ENCODE measurements at regions of chr16 and their contacts with region 1.

Region 1: DNA sequence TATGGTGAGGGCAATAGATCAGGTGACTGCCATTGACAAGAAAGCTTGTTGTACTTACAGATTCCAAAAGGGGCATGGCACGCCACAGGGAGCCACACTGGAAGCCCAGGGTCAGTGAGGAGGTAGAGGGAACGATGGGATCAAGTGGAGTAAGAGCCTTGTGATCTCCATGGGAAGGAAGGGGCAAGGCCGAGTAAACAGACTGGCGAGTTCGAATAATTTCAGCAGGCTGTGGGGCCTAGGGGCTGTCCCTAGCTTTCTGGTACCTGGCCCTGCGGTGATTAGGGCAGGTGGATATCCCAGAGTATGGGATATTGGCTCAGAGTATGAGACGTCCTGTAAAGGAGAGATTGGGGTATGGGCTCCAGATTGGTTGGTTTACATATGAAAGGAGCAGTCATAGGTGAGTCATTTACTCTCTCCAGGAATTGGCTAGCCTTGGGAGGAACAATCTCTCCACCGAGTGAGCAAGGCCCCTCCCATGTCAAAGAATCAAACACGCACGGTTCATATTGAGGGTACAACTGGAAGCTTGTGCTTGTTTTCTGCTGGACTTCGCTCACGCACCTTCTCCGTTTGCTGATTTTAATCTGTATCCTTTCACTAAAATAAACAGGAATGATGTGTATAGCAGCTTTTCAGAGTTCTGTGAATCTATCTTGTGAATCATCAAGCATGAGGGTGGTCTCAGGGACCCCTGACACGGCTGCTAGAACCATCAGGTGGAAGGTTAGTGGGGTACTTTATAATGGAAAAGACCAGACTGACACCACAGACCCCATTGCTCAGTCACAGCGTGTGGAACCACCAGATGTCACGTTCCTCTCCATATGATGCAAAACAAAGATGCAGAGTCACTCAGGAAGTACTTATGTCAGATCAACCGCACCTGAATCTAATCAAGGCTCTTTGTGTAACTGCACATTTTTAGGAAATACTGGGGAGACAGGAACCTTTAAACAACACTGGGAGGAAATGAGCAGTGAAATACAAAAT is 27.9 kb downstream of the GABARAPL2 start:
- DNase-seq: peak; percentile 83
- ATAC-seq: peak; percentile 52; the same call in 1 of the 2 replicates
- H3K4me3 ChIP-seq: no peak overlapping the region
- H3K27ac ChIP-seq: no peak overlapping the region
- H3K4me1 ChIP-seq: peaks cover 6% of the 10 kb centered on the region
- H3K27me3 ChIP-seq: no peaks in the 10 kb centered on the region
- CTCF ChIP-seq: no peak
- POLR2A ChIP-seq: no peak
- RAD21 ChIP-seq: no peak

Region 2: GRCh38 chr16:75218256-75219070 is 375.7 kb before region 1 on chr16 and contains the start of gene CTRB1:
- CTCF ChIA-PET with region 1: no interaction called
- POLR2A ChIA-PET with region 1: no interaction called
- dilution Hi-C with region 1: no loop called
- in situ Hi-C with region 1: loop called (anchors 25 kb)
- intact Hi-C with region 1: no loop called
- DNase-seq: no peak
- ATAC-seq: no peak
- H3K4me3 ChIP-seq: no peak within 1 kb of the TSS
- H3K27ac ChIP-seq: no peak within 1 kb of the TSS
- H3K4me1 ChIP-seq: no peaks in the 10 kb centered on the region
- H3K27me3 ChIP-seq: no peaks in the 10 kb centered on the region
- CTCF ChIP-seq: no peak
- POLR2A ChIP-seq: no peak
- RAD21 ChIP-seq: no peak
- total RNA-seq, gene CTRB1: not detected in 2 replicates

Region 3: GRCh38 chr16:75576384-75576811 is 17.7 kb before region 1 on chr16:
- CTCF ChIA-PET with region 1: no interaction called
- POLR2A ChIA-PET with region 1: interaction called, 19 read pairs
- dilution Hi-C with region 1: no loop called
- in situ Hi-C with region 1: no loop called
- intact Hi-C with region 1: no loop called
- DNase-seq: no peak
- ATAC-seq: no peak
- H3K4me3 ChIP-seq: no peak overlapping the region
- H3K27ac ChIP-seq: no peak overlapping the region
- H3K4me1 ChIP-seq: 0 out of 2 replicates have a peak, but pooled peaks cover 2% of the 10 kb centered on the region
- H3K27me3 ChIP-seq: no peaks in the 10 kb centered on the region
- CTCF ChIP-seq: no peak
- POLR2A ChIP-seq: no peak
- RAD21 ChIP-seq: no peak

Measured in IMR-90 (cell line).